ENCODE measurements at regions of chrX and their contacts with region 1.

Region 1: GRCh38 chrX:136028251-136028984 is 43.2 kb downstream of the SLC9A6 start:
- DNase-seq: peak; percentile 43
- CTCF ChIP-seq: peak; percentile 69

Region 2: DNA sequence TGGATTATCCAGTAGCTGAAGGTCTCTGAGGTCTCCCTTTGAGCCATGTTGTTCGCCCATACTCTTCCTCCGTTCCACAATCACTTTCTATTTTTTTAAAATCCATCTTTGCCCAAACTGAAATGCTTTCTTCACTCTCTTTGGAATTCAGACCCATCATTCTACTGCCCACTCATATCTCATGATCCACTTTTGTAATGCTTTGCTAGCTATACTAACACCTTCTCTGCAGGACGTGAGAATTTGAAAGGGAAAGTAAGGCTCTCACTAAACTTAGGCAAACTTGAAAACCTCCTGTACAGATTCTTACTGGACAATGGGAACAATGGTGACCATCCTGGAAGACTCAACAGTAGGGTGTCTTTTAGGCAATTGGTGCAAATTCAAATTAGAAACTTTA is 967.7 kb before region 1 on chrX:
- in situ Hi-C with region 1: no loop called
- DNase-seq: no peak
- CTCF ChIP-seq: no peak

Region 3: GRCh38 chrX:135944486-135944885 is 83.9 kb before region 1 on chrX:
- in situ Hi-C with region 1: no loop called
- DNase-seq: no peak
- CTCF ChIP-seq: no peak

Region 4: DNA sequence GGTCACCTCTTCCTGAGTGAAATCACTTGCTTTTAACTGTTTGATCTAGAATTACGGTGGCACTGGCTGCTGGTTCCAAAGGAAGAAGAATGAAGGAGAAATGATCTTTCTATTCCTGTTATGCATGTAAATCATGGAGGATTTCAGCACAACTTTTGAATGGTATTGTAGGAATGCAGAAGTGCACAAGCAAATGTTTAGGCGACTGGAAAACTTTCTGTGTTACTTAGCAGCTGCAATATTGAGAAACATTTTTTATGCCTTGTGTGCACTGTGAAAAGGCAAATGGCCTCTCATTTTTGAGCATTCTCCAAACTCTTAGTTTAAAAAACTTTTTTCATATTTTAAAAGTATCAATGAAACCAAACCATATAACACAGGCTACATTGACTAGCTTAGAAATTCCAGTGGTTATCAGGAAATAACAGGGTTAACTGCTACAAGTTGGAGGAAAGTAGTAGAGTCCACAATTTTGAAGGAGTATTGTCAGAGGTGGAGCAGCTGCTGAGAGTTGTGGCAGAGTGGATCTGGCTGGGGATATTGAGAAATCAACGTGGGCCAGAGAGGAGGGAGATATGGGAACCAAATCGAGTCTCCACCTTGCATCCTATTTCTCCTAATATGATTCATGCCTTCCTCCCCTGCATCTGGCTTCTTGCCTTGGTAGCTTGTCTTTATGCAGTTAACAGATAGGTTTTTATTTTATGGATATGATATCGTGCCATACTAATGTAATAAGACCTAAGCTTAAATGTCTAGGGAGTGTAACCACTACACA is 86.9 kb after region 1 on chrX:
- in situ Hi-C with region 1: no loop called
- DNase-seq: no peak
- CTCF ChIP-seq: no peak

Region 5: GRCh38 chrX:136251041-136251991 is 222.9 kb after region 1 on chrX and contains the start of gene MAP7D3:
- in situ Hi-C with region 1: loop called (anchors 25 kb)
- DNase-seq: peak; percentile 88
- CTCF ChIP-seq: no peak

Measured in GM13977 (cell line).